K562 (cell line): ENCODE measurements at regions of chr10 and their contacts with region 1.

Region 1: DNA sequence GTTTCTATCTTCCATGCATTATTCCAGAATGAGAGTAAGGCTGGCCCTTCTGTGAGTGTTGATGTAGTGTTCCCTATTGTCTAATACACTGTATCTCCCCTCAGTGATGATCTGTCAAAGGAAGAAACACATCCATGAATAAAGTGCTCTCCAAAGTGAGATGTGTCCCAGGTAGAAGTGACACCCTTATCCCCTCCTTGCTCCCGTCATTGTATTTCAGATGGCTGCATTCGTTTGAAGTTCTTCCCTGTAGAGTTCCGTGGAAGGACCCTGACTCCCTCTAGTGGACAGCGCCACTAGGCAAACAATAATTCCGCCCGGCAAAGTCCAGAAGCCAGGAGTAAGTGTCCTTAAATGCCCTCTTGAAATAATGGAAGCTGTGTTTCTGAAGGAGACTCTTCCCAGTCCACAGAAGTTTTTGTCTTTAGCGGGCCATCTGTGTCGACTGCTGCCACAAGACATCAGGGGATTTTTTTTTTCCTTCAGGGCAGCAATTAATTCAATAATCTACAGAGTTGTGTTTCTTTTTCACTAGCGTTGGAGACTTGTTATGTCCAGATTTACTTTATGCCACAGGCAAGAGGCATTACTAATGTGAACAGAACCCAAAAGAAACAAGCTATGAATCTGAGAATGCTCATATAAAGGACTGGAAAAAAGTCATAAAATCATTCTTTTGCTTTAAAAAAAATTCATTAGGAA is 64.6 kb downstream of the THNSL1 start:
- DNase-seq: peak; percentile 77 to 90 (median 80)
- ATAC-seq: peak; percentile 96
- H3K4me3 ChIP-seq: no peak overlapping the region
- H3K27ac ChIP-seq: no peak overlapping the region
- H3K4me1 ChIP-seq: peaks cover 0 to 14% of the 10 kb centered on the region in 2 experiments; a peak in 2 of 5 replicates
- H3K27me3 ChIP-seq: no peaks in the 10 kb centered on the region
- CTCF ChIP-seq: peak; percentile 90 to 95 (median 93)
- EP300 ChIP-seq: no peak
- POLR2A ChIP-seq: no peak
- RAD21 ChIP-seq: peak; percentile 94 to 97

Region 2: DNA sequence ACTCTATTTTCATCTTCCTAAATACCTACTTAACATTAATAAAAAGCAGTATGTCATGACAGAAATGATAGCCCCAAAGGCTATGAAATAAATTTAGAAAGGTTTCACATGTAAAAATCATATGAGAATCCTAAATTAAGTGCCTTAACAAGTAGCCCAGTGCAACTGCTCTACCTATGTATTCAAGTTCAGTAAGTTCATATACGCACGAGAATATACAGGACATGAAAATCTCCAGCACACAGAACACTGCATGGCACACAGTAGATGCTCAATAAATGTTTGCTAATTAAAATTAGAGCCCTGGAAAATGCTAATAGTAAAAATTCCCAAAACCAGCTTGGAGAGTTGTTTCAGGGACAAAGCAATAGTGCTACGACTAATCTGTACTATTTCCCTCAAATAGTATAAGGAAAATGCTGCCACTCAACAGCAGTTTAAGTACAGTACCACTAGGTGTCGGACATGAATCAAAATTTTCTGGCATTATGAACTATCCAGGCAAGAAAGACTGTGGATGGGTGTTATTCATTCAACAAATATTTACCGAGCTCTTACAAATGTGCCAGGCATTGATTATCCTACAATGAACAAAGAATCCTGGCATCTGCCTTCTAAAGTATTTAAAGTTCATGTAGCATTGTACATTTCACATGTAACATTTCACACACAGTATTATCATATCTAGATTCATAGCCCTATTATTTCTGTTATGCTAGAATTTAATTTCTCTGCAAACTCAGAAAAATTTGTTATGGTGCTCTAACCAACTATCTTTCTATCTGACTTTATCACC is 438.2 kb before region 1 on chr10:
- CTCF ChIA-PET with region 1: interaction called, 3 read pairs
- POLR2A ChIA-PET with region 1: no interaction called
- in situ Hi-C with region 1: loop called (anchors 5 kb)
- intact Hi-C with region 1: loop called (anchors 1 kb)
- DNase-seq: peak; percentile 21 to 72 (median 34)
- ATAC-seq: peak; percentile 92
- H3K4me3 ChIP-seq: no peak overlapping the region
- H3K27ac ChIP-seq: no peak overlapping the region
- H3K4me1 ChIP-seq: peaks cover 0 to 29% of the 10 kb centered on the region in 2 experiments; a peak in 4 of 5 replicates
- H3K27me3 ChIP-seq: no peaks in the 10 kb centered on the region
- CTCF ChIP-seq: peak; percentile 61 to 84 (median 80)
- EP300 ChIP-seq: no peak
- POLR2A ChIP-seq: no peak
- RAD21 ChIP-seq: peak; percentile 89 to 93

Region 3: GRCh38 chr10:24920907-24921881 is 159.8 kb before region 1 on chr10:
- CTCF ChIA-PET with region 1: interaction called, 6 read pairs
- POLR2A ChIA-PET with region 1: no interaction called
- in situ Hi-C with region 1: no loop called
- intact Hi-C with region 1: loop called (anchors 5 kb)
- DNase-seq: peak; percentile 72 to 96 (median 83)
- ATAC-seq: peak; percentile 98
- H3K4me3 ChIP-seq: no peak overlapping the region
- H3K27ac ChIP-seq: peak overlapping the region; percentile 88
- H3K4me1 ChIP-seq: peaks cover 15 to 18% of the 10 kb centered on the region in 2 experiments
- H3K27me3 ChIP-seq: no peaks in the 10 kb centered on the region
- CTCF ChIP-seq: peak in 2 of 3 experiments; percentile 10 to 14; a peak in 1 of 6 replicates
- EP300 ChIP-seq: peak; percentile 97
- POLR2A ChIP-seq: no peak; the same call in 1 of the 2 replicates
- RAD21 ChIP-seq: peak in 1 of 2 experiments; percentile 47; a peak in 3 of 4 replicates

Region 4: DNA sequence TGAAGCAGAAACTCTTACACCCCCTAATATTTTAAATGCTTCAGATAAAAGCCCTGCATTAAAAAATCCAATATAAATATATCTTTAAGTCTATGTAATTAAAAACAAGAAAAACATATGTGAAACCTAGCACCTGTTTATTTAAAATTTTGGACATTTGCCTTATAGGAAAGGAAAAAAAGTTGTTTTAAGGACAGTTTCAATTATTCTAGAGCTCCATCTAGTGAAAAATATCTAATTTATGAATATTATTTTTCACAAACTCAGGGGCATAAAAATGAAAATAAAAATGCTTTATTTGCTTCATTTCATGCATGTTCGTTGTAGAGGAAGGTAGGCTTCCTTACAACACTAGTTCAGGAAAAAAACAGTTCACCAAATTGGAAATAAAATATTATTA is 91.2 kb before region 1 on chr10:
- CTCF ChIA-PET with region 1: no interaction called
- POLR2A ChIA-PET with region 1: no interaction called
- in situ Hi-C with region 1: no loop called
- intact Hi-C with region 1: loop called (anchors 5 kb)
- DNase-seq: no peak
- ATAC-seq: no peak
- H3K4me3 ChIP-seq: no peak overlapping the region
- H3K27ac ChIP-seq: no peak overlapping the region
- H3K4me1 ChIP-seq: peaks cover 9 to 11% of the 10 kb centered on the region in 2 experiments
- H3K27me3 ChIP-seq: no peaks in the 10 kb centered on the region
- CTCF ChIP-seq: peak in 1 of 3 experiments; percentile 31; a peak in 2 of 6 replicates
- EP300 ChIP-seq: no peak
- POLR2A ChIP-seq: no peak
- RAD21 ChIP-seq: peak; percentile 20 to 52; a peak in 3 of 4 replicates

Region 5: DNA sequence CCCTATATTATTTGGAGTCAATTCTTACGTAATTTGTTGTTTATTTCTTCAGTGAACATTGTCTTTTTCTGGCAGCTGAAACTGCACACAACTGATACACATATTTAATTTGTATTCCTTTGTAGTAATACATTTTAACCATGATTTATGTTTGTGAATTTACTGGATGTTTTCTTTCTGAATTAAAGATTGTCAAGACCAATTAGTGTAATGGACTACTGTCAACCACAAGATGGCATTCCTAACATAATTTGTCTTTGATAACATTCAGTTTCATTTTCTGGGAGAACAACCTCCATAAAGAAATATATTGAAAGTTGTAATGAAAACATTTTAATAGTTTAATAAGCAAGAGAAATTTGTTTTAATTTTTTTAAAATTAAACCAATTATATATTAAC is 54.6 kb before region 1 on chr10:
- CTCF ChIA-PET with region 1: interaction called, 5 read pairs
- POLR2A ChIA-PET with region 1: no interaction called
- in situ Hi-C with region 1: no loop called
- intact Hi-C with region 1: loop called (anchors 1 kb)
- DNase-seq: peak in 1 of 4 experiments; percentile 14
- ATAC-seq: no peak
- H3K4me3 ChIP-seq: no peak overlapping the region
- H3K27ac ChIP-seq: no peak overlapping the region
- H3K4me1 ChIP-seq: no peaks in the 10 kb centered on the region
- H3K27me3 ChIP-seq: no peaks in the 10 kb centered on the region
- CTCF ChIP-seq: peak in 2 of 3 experiments; percentile 20 to 66; a peak in 3 of 6 replicates
- EP300 ChIP-seq: no peak
- POLR2A ChIP-seq: no peak
- RAD21 ChIP-seq: peak; percentile 56 to 77